ENCODE measurements at regions of chr3 and their contacts with region 1.

Region 1: GRCh38 chr3:49929331-49930240 is at the start of gene MON1A:
- DNase-seq: peak; percentile 92
- H3K4me3 Mint-ChIP-seq: peak within 1 kb of the TSS; percentile 79
- H3K27ac Mint-ChIP-seq: peak within 1 kb of the TSS; percentile 80
- H3K4me1 Mint-ChIP-seq: peaks cover 21% of the 10 kb centered on the region
- H3K27me3 Mint-ChIP-seq: no peaks in the 10 kb centered on the region
- total RNA-seq, gene MON1A: 6.3 to 7.8 TPM

Region 2: GRCh38 chr3:49007068-49007770 is 922.4 kb before region 1 on chr3 and contains the start of gene WDR6:
- CTCF ChIA-PET with region 1: no interaction called
- POLR2A ChIA-PET with region 1: no interaction called
- intact Hi-C with region 1: no loop called
- DNase-seq: peak; percentile 99
- H3K4me3 Mint-ChIP-seq: peak within 1 kb of the TSS; percentile 95
- H3K27ac Mint-ChIP-seq: peak within 1 kb of the TSS; percentile 98
- H3K4me1 Mint-ChIP-seq: peaks cover 21% of the 10 kb centered on the region
- H3K27me3 Mint-ChIP-seq: no peaks in the 10 kb centered on the region
- total RNA-seq, gene WDR6: 139 to 144 TPM

Region 3: GRCh38 chr3:49939858-49940666 is 10.5 kb after region 1 on chr3 and contains the start of gene RBM6:
- CTCF ChIA-PET with region 1: interaction called, 18 read pairs
- POLR2A ChIA-PET with region 1: interaction called, 28 read pairs
- intact Hi-C with region 1: loop called (anchors 1 kb)
- DNase-seq: peak; percentile 98
- H3K4me3 Mint-ChIP-seq: peak within 1 kb of the TSS; percentile 88
- H3K27ac Mint-ChIP-seq: peak within 1 kb of the TSS; percentile 90
- H3K4me1 Mint-ChIP-seq: peaks cover 30% of the 10 kb centered on the region
- H3K27me3 Mint-ChIP-seq: no peaks in the 10 kb centered on the region
- total RNA-seq, gene RBM6: 73.5 to 83.7 TPM

Region 4: DNA sequence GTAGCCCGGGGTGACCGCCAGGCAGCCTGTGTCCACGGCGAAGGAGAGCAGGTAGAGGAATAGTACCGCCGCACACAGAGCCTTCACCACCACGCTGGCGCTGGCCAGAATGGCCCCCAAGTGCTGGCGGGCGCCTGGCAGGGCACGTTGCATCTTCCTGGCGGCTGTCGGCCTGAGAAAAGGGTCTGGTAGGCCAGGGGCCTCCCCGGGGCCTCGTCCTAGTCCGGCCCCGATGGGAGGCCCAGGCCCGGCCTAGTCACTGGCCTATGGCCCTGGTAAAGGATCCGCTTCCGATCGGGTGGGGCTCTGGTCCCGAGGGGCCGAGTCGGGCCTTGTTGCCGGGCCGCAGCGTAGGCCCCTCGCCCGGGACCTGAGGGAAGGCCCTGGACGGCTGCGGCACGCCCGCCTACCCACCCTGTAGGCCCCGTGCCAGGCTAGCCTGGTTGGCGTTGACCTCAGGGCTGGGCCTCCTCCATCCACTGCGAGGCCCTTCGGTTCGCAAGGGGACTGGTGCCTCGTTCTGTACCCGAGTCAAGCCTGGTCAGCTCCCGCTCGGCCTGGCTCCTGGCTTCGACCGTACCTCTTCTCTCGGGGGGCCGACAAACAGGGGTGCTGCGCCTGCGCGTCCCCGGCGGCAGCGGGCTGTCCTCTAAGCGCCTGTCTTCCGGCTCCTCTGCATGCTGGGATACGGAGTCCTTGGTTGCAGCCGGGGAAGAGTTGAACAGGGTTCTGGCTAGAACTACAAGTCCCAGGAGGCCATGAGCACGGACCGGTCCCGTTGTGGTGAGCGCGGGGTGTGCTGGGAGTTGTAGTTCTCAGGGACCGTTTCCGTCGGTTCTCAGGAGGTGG is 429.5 kb after region 1 on chr3 and contains the start of gene TMEM115:
- CTCF ChIA-PET with region 1: no interaction called
- POLR2A ChIA-PET with region 1: no interaction called
- intact Hi-C with region 1: no loop called
- DNase-seq: peak; percentile 97
- H3K4me3 Mint-ChIP-seq: peak within 1 kb of the TSS; percentile 95
- H3K27ac Mint-ChIP-seq: peak within 1 kb of the TSS; percentile 86
- H3K4me1 Mint-ChIP-seq: peaks cover 39% of the 10 kb centered on the region
- H3K27me3 Mint-ChIP-seq: no peaks in the 10 kb centered on the region
- total RNA-seq, gene TMEM115: 16.0 TPM